Activated naive CD4-positive, alpha-beta T cell treated with anti-CD3 and anti-CD28 coated beads for 36 hours (primary cell): ENCODE measurements at regions of chr14 and their contacts with region 1.

Region 1: GRCh38 chr14:91373591-91374254 is 43.9 kb downstream of the CCDC88C start:
- DNase-seq: peak; percentile 83
- H3K4me3 Mint-ChIP-seq: peak overlapping the region; percentile 58
- H3K27ac Mint-ChIP-seq: peak overlapping the region; percentile 93
- H3K4me1 Mint-ChIP-seq: peaks cover 99% of the 10 kb centered on the region
- H3K27me3 Mint-ChIP-seq: no peaks in the 10 kb centered on the region

Region 2: DNA sequence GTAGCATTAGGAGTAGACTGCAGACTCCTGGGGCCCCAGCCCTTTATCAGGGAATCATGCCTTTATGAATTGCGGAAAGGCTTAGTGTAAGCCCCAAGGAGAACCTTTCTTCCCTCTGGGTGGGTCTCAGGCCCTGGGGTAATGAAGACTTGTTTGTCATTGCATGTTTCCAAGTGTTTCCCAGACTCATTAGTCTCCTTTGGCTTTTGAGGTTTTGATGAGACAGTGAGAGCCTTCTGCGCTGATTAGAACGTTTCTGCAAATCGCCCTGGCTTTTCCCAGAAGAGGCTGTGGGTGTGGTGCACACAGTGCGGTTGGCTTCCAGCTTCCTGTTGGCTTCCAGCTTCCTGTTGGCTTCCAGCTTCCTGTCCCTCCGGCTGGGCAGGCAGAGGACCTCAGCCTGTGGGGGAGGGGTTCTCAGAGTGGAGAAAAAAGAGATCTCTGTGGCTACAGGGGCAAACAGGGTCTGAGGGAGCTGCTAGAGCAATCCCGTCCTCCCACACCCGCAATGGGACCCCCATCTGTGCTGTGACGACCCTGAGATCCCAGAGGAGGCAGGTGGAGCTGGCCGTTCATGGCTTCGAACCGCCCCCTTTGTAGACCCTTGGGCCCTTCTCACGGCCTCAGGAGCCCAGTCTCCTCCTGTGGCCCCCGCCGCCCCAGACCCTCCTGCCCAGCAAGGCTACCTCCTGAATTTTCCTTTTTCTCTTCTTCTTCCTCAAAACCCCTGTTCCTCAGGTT is 171.3 kb before region 1 on chr14:
- CTCF ChIA-PET with region 1: no interaction called
- intact Hi-C with region 1: no loop called
- DNase-seq: no peak
- H3K4me3 Mint-ChIP-seq: no peak overlapping the region
- H3K27ac Mint-ChIP-seq: no peak overlapping the region
- H3K4me1 Mint-ChIP-seq: peaks cover 29% of the 10 kb centered on the region
- H3K27me3 Mint-ChIP-seq: no peaks in the 10 kb centered on the region

Region 3: DNA sequence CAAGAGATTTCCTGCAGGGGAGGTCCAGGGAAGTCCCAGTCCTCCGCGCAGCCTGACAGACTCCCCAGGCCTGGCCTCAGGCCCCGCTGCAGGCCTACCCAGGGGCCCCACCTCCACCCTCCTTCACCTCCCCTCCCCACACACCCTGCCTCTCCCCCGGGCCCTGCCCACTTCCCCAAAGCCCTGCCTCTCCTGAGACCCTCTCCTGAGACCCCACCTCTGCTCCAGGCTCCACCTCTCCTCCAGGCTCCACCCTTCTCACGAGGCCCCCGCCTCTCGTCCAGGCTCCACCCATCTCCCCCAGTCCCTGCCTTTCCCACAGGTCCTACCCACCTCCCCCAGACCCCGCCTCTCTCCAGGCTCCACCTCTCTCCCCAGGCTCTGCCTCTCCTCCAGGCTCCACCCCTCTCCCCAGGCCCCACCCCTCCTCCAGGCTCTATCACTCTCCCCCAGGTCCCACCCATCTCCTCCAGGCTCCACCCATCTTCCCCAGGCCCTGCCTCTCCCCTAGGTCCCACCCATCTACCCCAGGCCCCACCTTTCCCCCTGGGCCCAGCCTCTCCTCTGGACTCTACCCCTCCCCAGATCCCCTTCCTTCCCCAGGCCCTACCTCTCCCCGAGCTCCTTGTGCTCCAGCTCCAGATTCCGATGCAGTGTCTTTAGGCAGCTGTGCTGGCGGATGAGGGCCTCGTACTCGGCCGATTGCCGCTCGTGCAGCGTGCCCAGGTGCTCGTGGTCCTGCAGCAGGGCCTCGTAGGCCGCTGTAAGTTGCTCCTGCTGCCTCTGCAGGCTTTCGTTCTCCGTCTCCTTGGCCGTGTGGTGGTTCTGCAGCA is 70.4 kb before region 1 on chr14:
- CTCF ChIA-PET with region 1: no interaction called
- intact Hi-C with region 1: loop called (anchors 1 kb)
- DNase-seq: peak; percentile 89
- H3K4me3 Mint-ChIP-seq: no peak overlapping the region
- H3K27ac Mint-ChIP-seq: peak overlapping the region; percentile 93
- H3K4me1 Mint-ChIP-seq: peaks cover 58% of the 10 kb centered on the region
- H3K27me3 Mint-ChIP-seq: no peaks in the 10 kb centered on the region

Region 4: GRCh38 chr14:91323671-91324605 is 49.8 kb before region 1 on chr14:
- CTCF ChIA-PET with region 1: interaction called, 7 read pairs
- intact Hi-C with region 1: loop called (anchors 1 kb)
- DNase-seq: peak; percentile 99
- H3K4me3 Mint-ChIP-seq: peak overlapping the region; percentile 83
- H3K27ac Mint-ChIP-seq: peak overlapping the region; percentile 99
- H3K4me1 Mint-ChIP-seq: peaks cover 79% of the 10 kb centered on the region
- H3K27me3 Mint-ChIP-seq: no peaks in the 10 kb centered on the region

Region 5: GRCh38 chr14:91396959-91397815 is 23.5 kb after region 1 on chr14:
- CTCF ChIA-PET with region 1: interaction called, 5 read pairs
- intact Hi-C with region 1: loop called (anchors 1 kb)
- DNase-seq: peak; percentile 88
- H3K4me3 Mint-ChIP-seq: peak overlapping the region; percentile 64
- H3K27ac Mint-ChIP-seq: peak overlapping the region; percentile 87
- H3K4me1 Mint-ChIP-seq: peaks cover 92% of the 10 kb centered on the region
- H3K27me3 Mint-ChIP-seq: no peaks in the 10 kb centered on the region